Activated T-helper 1 cell treated with anti-CD3 and anti-CD28 coated beads, Interleukin-12 subunit alpha, Interleukin-12 subunit beta, Interleukin-2, Interleukin-4 antibody, amounts not matched to agents 30 ng/mL and 10 ng/mL and 1 ng/mL, durations not matched to agents 14 hours and 24 hours and 36 hours (primary cell): ENCODE measurements at regions of chr22 and their contacts with region 1.

Region 1: DNA sequence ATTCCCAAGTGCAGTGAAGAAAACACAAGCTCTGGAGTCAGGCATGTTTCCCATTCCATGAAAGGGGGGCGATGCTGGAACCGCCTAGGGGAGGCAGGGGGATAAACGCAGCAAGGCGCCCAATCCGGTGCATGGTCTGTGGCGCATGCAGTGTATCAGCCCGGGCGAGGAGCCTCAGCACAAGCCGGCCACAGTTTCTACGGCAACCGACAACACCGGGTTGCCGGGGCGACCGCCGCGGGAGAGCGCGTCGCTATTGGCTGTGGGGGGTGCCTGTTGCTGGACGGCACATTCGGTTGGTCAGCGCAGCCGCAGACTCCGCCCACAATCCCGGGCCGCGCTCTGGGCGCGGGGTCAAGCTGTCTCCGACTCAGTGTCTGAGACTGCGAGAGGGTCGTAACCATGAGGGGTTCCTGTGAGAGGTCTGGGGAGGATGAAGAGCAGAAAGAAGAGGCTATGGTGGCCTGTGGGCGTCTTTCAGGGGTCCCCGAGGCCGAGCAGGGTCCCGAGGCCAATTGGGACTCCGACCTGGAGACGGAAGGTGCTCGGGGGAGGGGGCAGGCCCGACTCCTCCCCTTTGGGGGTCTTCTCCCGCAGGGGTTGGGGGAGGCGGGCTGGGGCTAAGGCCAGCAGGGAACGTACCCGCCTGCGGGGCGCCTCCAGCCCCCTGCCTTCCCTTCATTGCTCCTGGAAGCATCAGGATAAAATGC is at the start of gene LRRC74B:
- DNase-seq: peak; percentile 66
- H3K4me3 Mint-ChIP-seq: peak within 1 kb of the TSS; percentile 42
- H3K27ac Mint-ChIP-seq: peak within 1 kb of the TSS; percentile 80
- H3K4me1 Mint-ChIP-seq: peaks cover 17% of the 10 kb centered on the region
- H3K27me3 Mint-ChIP-seq: peaks cover 22% of the 10 kb centered on the region
- total RNA-seq, gene LRRC74B: not detected in 2 replicates

Region 2: DNA sequence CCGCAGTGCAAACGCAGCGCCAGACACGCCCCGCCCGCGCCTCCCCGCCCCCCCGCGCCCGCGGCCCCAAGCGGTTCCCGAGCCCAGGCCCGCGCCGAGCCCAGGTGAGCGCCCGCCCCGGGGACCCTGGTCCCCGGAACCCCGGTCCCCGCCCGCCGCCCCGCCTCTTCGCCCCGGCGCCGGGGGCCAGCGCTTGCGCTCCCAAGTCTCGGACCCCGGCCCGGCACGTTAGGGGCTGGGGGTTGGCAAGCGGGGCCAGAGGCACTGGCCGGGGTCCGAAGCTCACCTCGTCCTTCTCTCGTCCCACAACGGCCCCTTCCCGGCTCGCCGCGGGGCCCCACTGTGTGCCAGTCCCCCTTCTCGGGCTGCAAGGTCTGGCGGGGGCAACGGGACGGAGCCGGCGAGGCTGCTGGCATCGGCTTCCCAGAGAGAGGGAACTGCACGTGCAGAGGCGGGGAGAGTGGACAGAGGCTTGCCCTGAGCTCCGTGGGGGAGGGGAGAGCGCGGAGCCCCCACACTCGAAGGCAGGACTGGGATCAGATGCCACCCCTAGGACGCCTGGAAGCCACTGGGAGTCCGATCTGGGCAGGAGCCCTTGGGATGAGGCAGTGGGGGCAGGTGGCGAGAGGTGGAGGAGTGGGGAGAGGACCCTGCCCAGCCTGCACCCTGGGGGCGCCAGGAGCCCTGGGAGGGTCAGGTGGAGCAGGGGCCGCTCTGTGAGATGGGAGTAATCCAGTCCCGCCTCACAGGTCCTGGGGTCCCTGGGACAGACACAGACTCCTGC is 80.4 kb before region 1 on chr22:
- intact Hi-C with region 1: no loop called
- DNase-seq: no peak
- H3K4me3 Mint-ChIP-seq: no peak overlapping the region
- H3K27ac Mint-ChIP-seq: no peak overlapping the region
- H3K4me1 Mint-ChIP-seq: peaks cover 11% of the 10 kb centered on the region
- H3K27me3 Mint-ChIP-seq: peaks cover 22% of the 10 kb centered on the region

Region 3: DNA sequence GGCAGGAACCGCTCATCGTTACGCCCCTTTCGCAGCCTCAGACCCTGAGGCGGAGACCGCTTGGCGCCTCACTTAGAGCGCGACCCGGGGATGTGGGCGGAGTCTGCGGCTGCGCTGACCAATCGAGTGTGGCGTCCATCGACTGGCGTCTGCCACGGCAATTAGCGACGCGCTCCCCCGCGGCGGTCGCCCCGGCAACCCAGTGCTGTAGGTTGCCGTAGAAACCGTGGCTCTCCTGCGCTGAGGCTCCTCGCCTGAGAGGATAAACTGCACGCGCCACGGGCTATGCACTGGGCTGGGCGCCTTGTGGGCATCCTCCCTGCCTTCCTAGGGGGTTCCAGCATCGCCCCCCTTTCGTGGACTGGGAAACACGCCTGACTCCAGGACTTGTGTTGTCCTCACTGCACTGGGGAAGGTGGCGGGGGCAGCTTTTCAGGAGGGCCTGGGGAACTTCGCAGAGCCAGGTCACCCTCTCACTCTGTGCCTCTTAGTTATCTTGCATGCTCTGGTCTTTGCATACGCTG is 31.5 kb before region 1 on chr22:
- intact Hi-C with region 1: loop called (anchors 1 kb)
- DNase-seq: peak; percentile 75
- H3K4me3 Mint-ChIP-seq: peak overlapping the region; percentile 67
- H3K27ac Mint-ChIP-seq: peak overlapping the region; percentile 63
- H3K4me1 Mint-ChIP-seq: peaks cover 15% of the 10 kb centered on the region
- H3K27me3 Mint-ChIP-seq: peaks cover 5% of the 10 kb centered on the region